ENCODE measurements at regions of chr21 and their contacts with region 1.

Region 1: GRCh38 chr21:45643021-45643980 is at the start of gene PCBP3:
- DNase-seq: peak; percentile 86 to 95 (median 88)
- ATAC-seq: peak; percentile 82
- H3K4me3 ChIP-seq: no peak within 1 kb of the TSS
- H3K4me3 Mint-ChIP-seq: peak within 1 kb of the TSS; percentile 77
- H3K27ac ChIP-seq: no peak within 1 kb of the TSS
- H3K27ac Mint-ChIP-seq: peak within 1 kb of the TSS; percentile 37
- H3K4me1 ChIP-seq: peaks cover 21% of the 10 kb centered on the region
- H3K4me1 Mint-ChIP-seq: peaks cover 33% of the 10 kb centered on the region
- H3K27me3 ChIP-seq: peaks cover 15 to 20% of the 10 kb centered on the region in 2 experiments
- H3K27me3 Mint-ChIP-seq: peaks cover 27% of the 10 kb centered on the region
- CTCF ChIP-seq: no peak
- total RNA-seq, gene PCBP3: 1.3 to 2.4 TPM

Region 2: GRCh38 chr21:45074048-45074817 is 569.1 kb before region 1 on chr21 and contains the start of gene ADARB1:
- CTCF ChIA-PET with region 1: no interaction called
- POLR2A ChIA-PET with region 1: no interaction called
- intact Hi-C with region 1: loop called in 1 of 2 experiments (anchors 10 kb)
- DNase-seq: peak; percentile 24 to 87 (median 63)
- ATAC-seq: peak; percentile 55
- H3K4me3 ChIP-seq: peak within 1 kb of the TSS; percentile 58 to 69
- H3K4me3 Mint-ChIP-seq: peak within 1 kb of the TSS; percentile 95
- H3K27ac ChIP-seq: peak within 1 kb of the TSS; percentile 36 to 68
- H3K27ac Mint-ChIP-seq: peak within 1 kb of the TSS; percentile 92
- H3K4me1 ChIP-seq: peaks cover 38% of the 10 kb centered on the region
- H3K4me1 Mint-ChIP-seq: peaks cover 41% of the 10 kb centered on the region
- H3K27me3 ChIP-seq: no peaks in the 10 kb centered on the region
- H3K27me3 Mint-ChIP-seq: no peaks in the 10 kb centered on the region
- CTCF ChIP-seq: no peak
- total RNA-seq, gene ADARB1: 21.1 to 22.6 TPM

Region 3: GRCh38 chr21:45152265-45152746 is 491.0 kb before region 1 on chr21:
- CTCF ChIA-PET with region 1: no interaction called
- POLR2A ChIA-PET with region 1: no interaction called
- intact Hi-C with region 1: no loop called
- DNase-seq: peak; percentile 47 to 88 (median 73)
- ATAC-seq: peak; percentile 95
- H3K4me3 ChIP-seq: no peak overlapping the region
- H3K4me3 Mint-ChIP-seq: peak overlapping the region; percentile 70
- H3K27ac ChIP-seq: peak overlapping the region; percentile 11 to 21
- H3K27ac Mint-ChIP-seq: peak overlapping the region; percentile 79
- H3K4me1 ChIP-seq: peaks cover 39% of the 10 kb centered on the region
- H3K4me1 Mint-ChIP-seq: peaks cover 35% of the 10 kb centered on the region
- H3K27me3 ChIP-seq: no peaks in the 10 kb centered on the region
- H3K27me3 Mint-ChIP-seq: no peaks in the 10 kb centered on the region
- CTCF ChIP-seq: peak; percentile 54

Region 4: GRCh38 chr21:45590246-45590725 is 53.0 kb before region 1 on chr21:
- CTCF ChIA-PET with region 1: interaction called, 3 read pairs
- POLR2A ChIA-PET with region 1: no interaction called
- intact Hi-C with region 1: loop called in 1 of 2 experiments (anchors 1 kb)
- DNase-seq: peak; percentile 44 to 82 (median 71)
- ATAC-seq: peak; percentile 67
- H3K4me3 ChIP-seq: peak overlapping the region; percentile 41 to 44
- H3K4me3 Mint-ChIP-seq: peak overlapping the region; percentile 46
- H3K27ac ChIP-seq: no peak overlapping the region
- H3K27ac Mint-ChIP-seq: no peak overlapping the region
- H3K4me1 ChIP-seq: peaks cover 28% of the 10 kb centered on the region
- H3K4me1 Mint-ChIP-seq: peaks cover 10% of the 10 kb centered on the region
- H3K27me3 ChIP-seq: peaks cover 0 to 16% of the 10 kb centered on the region in 2 experiments
- H3K27me3 Mint-ChIP-seq: peaks cover 3% of the 10 kb centered on the region
- CTCF ChIP-seq: no peak

Region 5: GRCh38 chr21:45768751-45769070 is 125.4 kb after region 1 on chr21:
- CTCF ChIA-PET with region 1: no interaction called
- POLR2A ChIA-PET with region 1: no interaction called
- intact Hi-C with region 1: loop called in 1 of 2 experiments (anchors 1 kb)
- DNase-seq: peak in 1 of 9 experiments; percentile 21
- ATAC-seq: no peak
- H3K4me3 ChIP-seq: no peak overlapping the region
- H3K4me3 Mint-ChIP-seq: no peak overlapping the region
- H3K27ac ChIP-seq: no peak overlapping the region
- H3K27ac Mint-ChIP-seq: peak overlapping the region; percentile 91
- H3K4me1 ChIP-seq: peaks cover 27% of the 10 kb centered on the region
- H3K4me1 Mint-ChIP-seq: peaks cover 32% of the 10 kb centered on the region
- H3K27me3 ChIP-seq: no peaks in the 10 kb centered on the region
- H3K27me3 Mint-ChIP-seq: no peaks in the 10 kb centered on the region
- CTCF ChIP-seq: no peak

Region 6: DNA sequence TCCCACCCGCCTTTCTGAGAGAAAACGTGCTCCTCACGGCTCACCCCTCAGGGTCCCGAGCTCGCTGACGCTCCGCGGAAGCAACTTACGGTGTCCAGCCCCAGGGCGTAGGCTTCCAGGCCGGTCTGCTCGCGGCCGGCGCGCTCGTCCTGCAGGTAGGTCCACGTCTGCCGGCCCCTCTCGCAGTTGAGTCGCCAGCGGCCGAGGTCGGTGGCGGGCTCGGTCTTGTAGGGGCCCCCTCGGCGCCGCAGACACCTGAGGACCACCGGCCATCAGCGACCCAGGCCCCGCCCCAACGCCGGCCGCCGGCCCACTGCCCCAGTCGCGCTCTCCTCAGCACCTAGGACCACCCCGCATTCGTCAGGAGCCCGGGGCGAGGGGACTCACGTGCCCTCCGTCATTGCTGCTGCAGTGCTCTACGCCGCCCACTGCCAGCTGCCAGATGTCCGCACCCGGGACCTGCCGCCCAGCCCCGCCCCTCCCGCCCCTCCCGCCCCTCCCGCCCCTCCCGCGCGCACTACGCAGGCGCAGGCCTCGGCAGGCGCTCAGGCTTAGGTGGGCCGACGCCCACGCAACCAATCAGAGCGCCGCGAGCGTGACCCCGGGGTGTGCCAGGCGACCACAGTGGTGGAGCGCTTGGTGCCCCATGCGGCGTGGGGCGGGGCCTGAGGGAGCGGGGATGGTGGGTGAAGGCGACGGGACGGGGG is 585.2 kb after region 1 on chr21 and contains the start of gene LSS:
- CTCF ChIA-PET with region 1: no interaction called
- POLR2A ChIA-PET with region 1: no interaction called
- intact Hi-C with region 1: loop called in 1 of 2 experiments (anchors 5 kb)
- DNase-seq: peak; percentile 96 to 100 (median 98)
- ATAC-seq: peak; percentile 97
- H3K4me3 ChIP-seq: peak within 1 kb of the TSS; percentile 81 to 88
- H3K4me3 Mint-ChIP-seq: peak within 1 kb of the TSS; percentile 93
- H3K27ac ChIP-seq: peak within 1 kb of the TSS; percentile 55 to 58
- H3K27ac Mint-ChIP-seq: peak within 1 kb of the TSS; percentile 91
- H3K4me1 ChIP-seq: peaks cover 25% of the 10 kb centered on the region
- H3K4me1 Mint-ChIP-seq: peaks cover 49% of the 10 kb centered on the region
- H3K27me3 ChIP-seq: no peaks in the 10 kb centered on the region
- H3K27me3 Mint-ChIP-seq: no peaks in the 10 kb centered on the region
- CTCF ChIP-seq: no peak
- total RNA-seq, gene LSS: 22.5 to 22.6 TPM